Sigmoid colon (tissue), 7 donors: ENCODE measurements at regions of chr3 and their contacts with region 1.

Region 1: GRCh38 chr3:71734883-71735282 is 9.7 kb upstream of the EIF4E3 start:
- DNase-seq: no peak
- H3K4me3 ChIP-seq: no peak overlapping the region
- H3K27ac ChIP-seq: no peak overlapping the region
- H3K4me1 ChIP-seq: no peaks in the 10 kb centered on the region
- H3K27me3 ChIP-seq: no peaks in the 10 kb centered on the region
- CTCF ChIP-seq: no peak
- EP300 ChIP-seq: no peak
- POLR2A ChIP-seq: no peak

Region 2: DNA sequence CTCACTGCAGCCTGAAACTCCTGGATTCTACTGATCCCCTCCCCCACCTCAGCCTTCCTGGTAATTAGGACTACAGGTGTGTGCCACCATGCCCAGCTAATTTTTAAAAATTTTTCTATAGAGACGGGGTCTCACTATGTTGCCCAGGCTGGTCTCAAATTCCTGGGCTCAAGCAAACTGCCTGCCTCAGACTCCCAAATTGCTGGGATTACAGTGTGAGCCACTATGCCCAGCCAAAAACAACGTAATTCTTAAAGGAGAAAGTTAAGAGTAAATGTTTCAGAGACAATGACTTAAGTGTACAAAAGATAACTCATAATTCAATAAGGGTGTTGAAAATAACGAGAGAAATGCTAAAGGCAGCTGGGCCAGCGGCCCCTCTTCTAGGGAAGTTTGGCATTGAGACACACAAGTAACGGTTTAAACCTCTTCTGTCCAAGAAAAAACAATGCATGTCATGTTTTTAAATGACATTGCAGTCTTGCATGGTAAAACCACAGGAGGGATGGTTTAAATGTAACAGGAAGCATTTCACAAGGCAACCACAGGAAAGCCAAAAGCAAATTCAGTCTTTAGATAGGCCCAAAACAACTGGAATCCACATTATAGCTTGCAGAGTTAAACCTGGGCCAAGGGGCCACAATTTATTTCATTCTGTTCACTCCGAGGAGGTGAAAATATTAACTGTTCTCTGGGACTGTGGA is 44.9 kb after region 1 on chr3:
- intact Hi-C with region 1: loop called (anchors 5 kb)
- DNase-seq: no peak
- H3K4me3 ChIP-seq: no peak overlapping the region
- H3K27ac ChIP-seq: no peak overlapping the region
- H3K4me1 ChIP-seq: peaks cover 0 to 9% (median 8%) of the 10 kb centered on the region in 4 donors
- H3K27me3 ChIP-seq: peaks cover 25 to 93% (median 55%) of the 10 kb centered on the region in 3 donors
- CTCF ChIP-seq: no peak
- EP300 ChIP-seq: no peak
- POLR2A ChIP-seq: no peak